OCI-LY7 (cell line): ENCODE measurements at regions of chr1 and their contacts with region 1.

Region 1: DNA sequence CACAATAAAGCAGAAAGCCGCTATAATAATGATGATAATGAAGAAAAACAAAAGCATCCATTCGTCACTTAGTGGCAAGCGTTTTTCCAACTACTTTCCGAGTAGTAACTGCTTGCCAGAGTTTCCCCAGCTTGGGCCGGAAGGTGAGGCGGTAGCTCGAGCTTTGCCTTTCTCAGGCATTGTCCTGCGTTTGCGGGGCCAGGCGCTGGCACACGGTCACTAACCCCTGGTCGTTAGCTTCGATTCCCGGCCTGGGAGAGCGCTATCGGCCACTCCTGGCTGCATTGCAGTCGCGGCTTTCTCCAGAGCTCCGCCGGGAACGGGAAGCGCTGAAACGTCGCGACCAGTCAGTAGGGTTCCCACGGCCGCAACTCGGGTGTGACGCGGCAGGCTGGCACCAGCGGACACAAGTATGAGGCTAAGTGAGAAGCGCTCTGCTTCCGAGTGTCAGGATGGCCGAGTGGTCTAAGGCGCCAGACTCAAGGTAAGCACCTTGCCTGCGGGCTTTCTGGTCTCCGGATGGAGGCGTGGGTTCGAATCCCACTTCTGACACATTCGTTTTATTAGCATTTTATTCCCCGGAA is 14.6 kb upstream of the ZNF692 start:
- DNase-seq: peak; percentile 95
- H3K4me3 ChIP-seq: peak overlapping the region; percentile 81
- H3K27ac ChIP-seq: peak overlapping the region; percentile 83
- H3K4me1 ChIP-seq: peaks cover 12% of the 10 kb centered on the region
- CTCF ChIP-seq: no peak

Region 2: DNA sequence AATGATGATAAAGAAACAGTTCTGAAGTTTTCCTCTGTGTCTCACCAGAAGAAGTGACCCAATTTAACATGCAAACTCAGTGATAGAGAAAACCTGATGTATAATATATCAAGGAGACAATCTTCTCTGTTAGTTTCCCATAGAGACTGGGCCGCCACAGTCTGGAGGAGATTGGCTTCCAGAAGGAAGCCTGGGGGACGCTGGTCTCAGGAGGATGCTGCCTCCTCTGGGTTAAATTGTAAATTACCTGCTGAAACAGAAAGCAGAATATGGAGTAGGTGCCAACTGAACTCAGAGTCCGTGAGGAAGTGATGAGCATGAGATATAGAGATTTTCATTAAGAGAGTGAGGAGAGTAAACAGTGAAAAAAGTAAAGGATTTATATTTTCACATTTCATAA is 186.7 kb before region 1 on chr1:
- CTCF ChIA-PET with region 1: no interaction called
- POLR2A ChIA-PET with region 1: no interaction called
- intact Hi-C with region 1: no loop called
- DNase-seq: peak; percentile 6
- H3K4me3 ChIP-seq: no peak overlapping the region
- H3K27ac ChIP-seq: no peak overlapping the region
- H3K4me1 ChIP-seq: no peaks in the 10 kb centered on the region
- CTCF ChIP-seq: peak; percentile 60

Region 3: GRCh38 chr1:248779350-248779749 is 94.2 kb before region 1 on chr1:
- CTCF ChIA-PET with region 1: no interaction called
- POLR2A ChIA-PET with region 1: no interaction called
- intact Hi-C with region 1: no loop called
- DNase-seq: no peak
- H3K4me3 ChIP-seq: no peak overlapping the region
- H3K27ac ChIP-seq: no peak overlapping the region
- H3K4me1 ChIP-seq: no peaks in the 10 kb centered on the region
- CTCF ChIP-seq: no peak

Region 4: GRCh38 chr1:248807067-248807737 is 66.3 kb before region 1 on chr1:
- CTCF ChIA-PET with region 1: no interaction called
- POLR2A ChIA-PET with region 1: no interaction called
- intact Hi-C with region 1: no loop called
- DNase-seq: peak; percentile 73
- H3K4me3 ChIP-seq: no peak overlapping the region
- H3K27ac ChIP-seq: no peak overlapping the region
- H3K4me1 ChIP-seq: peaks cover 25% of the 10 kb centered on the region
- CTCF ChIP-seq: peak; percentile 92

Region 5: DNA sequence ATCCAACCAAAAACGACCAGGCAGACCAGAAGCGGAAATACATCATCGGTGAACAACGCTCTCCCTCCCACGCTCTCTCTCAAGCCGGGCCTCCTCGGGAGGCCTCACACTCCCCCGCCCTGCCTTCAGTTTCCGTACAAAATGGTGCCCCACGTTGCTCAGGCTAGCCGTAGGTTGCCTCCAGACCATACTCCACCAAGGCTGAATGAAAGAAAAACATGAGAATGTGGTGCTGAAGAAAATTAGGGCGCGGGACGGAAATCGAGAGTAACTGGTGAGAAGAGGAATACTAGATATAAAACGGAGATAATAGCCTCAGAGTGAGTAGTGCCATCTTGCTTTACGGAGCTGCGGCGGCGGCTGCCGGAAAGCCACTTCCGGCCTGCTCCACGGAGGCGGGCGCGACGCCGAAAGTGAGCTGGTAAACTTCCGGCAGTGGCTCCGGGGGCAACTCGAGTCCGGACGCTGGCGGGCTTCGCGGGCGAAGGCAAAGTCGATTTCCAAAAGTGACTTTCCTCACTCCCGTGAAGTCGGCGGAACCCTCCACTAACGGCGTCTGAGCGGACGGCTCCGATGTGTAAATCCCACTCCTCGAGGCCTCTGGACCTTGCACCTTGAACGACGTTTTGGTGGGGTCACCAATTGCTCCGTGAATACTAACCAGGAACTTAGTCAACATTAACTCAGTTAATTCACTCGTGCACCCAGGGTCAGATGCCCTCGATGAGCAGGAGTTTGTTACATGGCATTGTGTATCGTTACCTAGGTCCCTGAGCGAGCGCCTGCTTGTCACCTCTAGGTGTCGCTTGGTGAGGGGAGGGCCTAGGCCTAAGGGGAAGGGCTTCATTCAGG is 47.4 kb before region 1 on chr1 and contains the start of gene SH3BP5L:
- CTCF ChIA-PET with region 1: interaction called, 3 read pairs
- POLR2A ChIA-PET with region 1: interaction called, 4 read pairs
- intact Hi-C with region 1: loop called (anchors 1 kb)
- DNase-seq: peak; percentile 95
- H3K4me3 ChIP-seq: peak within 1 kb of the TSS; percentile 73
- H3K27ac ChIP-seq: peak within 1 kb of the TSS; percentile 78
- H3K4me1 ChIP-seq: peaks cover 40% of the 10 kb centered on the region
- CTCF ChIP-seq: peak; percentile 95
- total RNA-seq, gene SH3BP5L: 14.5 and 16.9 TPM in 2 replicates

Region 6: DNA sequence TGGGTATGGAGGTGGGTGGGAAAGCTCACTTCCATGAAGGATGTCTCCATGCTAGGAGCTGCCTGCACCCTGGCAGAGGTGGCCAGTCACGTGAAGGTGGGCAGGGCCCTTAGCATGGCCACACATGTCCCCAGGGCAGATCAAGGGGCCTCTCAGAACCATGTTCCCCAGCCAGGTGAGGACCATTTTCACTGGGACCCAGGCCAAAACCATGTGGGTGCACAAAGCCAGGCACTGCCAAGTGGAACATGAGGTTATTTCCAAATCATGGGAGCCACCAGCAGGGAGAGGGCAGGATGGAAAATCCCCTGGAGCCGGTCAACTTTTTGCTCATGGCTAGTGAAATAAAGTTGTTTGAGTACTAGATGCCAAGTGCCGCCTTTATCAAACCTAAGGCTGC is 24.3 kb before region 1 on chr1:
- CTCF ChIA-PET with region 1: no interaction called
- POLR2A ChIA-PET with region 1: no interaction called
- intact Hi-C with region 1: no loop called
- DNase-seq: no peak
- H3K4me3 ChIP-seq: no peak overlapping the region
- H3K27ac ChIP-seq: no peak overlapping the region
- H3K4me1 ChIP-seq: peaks cover 9% of the 10 kb centered on the region
- CTCF ChIP-seq: no peak

Region 7: DNA sequence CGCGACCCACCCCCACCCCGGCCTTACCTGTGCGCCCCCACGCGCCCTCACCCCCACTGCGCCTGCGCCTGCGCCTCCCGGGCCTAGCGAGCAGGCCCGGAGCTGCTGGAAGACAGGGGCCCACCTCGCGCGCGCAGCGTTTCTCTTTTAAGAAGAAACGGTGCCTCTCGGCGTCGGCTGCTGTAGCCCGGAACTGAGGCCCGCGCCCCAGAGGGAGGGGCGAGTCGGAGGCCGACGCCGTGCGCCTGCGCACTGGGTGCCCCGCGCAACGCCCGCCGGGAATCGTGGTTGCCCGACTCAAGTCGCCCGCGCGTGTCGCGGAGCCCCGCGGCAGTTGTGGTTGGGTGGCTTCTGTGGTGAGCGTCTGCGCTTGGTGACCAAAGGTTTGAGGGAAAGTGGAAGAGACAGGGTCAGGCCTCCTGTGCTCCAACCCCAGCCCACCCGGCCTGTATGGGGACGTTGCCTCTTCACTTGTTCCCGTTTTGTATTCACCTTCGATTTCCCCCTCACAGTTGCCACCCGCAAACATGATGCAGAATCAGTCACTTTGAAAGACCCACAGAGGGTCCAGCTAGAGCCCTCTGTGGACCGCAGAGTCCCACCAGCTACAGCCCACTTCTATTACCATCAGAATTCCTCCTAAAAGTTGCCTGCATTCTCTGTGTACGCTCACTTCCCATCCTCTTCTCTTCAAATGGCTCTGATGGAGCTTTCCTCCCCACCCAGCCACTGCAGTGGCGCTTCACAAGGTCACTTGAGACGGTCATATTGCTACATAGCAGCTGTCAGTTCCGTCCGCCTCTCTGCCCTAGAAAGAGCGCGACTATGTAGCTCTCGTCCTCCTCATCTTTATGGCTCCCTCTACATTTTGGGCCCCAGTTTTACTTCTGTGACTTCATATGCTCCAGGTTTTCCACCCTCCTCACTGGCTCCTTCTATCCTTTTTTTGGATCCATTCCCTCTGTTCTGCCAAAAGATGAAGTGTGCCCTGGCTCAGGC is 14.3 kb before region 1 on chr1 and contains the start of gene ZNF692:
- CTCF ChIA-PET with region 1: interaction called, 18 read pairs
- POLR2A ChIA-PET with region 1: interaction called, 17 read pairs
- intact Hi-C with region 1: loop called (anchors 1 kb)
- DNase-seq: peak; percentile 99
- H3K4me3 ChIP-seq: peak within 1 kb of the TSS; percentile 79
- H3K27ac ChIP-seq: peak within 1 kb of the TSS; percentile 72
- H3K4me1 ChIP-seq: peaks cover 39% of the 10 kb centered on the region
- CTCF ChIP-seq: no peak
- total RNA-seq, gene ZNF692: 49.7 and 65.0 TPM in 2 replicates

Region 8: DNA sequence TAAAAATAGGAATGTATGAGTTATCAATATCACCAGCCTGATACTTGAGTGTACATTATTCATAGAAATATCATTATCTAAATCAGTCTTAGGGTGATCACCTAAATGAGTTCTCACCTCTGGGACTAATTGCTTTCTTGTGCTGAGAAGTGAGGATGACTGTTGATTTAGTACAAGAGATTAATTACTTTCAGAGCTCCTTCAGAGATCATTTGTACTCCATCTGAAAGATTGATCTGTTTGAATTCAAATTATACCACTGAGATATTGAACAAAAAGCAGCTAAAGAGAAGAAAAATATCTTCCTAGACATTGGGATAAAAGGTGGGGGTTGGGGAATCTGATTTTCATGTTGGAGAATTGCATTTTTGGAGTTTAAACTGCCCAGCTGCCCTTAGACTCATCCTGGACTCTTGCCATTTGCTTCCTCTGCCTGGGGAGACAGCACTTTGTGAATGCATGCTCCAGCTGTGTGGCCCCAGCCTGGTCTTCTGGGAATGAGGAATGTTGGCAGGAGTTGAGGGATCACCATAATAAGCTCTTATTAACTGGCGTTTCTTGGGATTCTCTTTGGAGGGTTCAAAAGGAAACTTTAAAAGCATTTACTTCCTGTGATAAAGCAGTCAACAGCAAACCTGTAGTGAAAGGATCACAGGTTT is 12.9 kb after region 1 on chr1:
- CTCF ChIA-PET with region 1: no interaction called
- POLR2A ChIA-PET with region 1: interaction called, 12 read pairs
- intact Hi-C with region 1: no loop called
- DNase-seq: no peak
- H3K4me3 ChIP-seq: no peak overlapping the region
- H3K27ac ChIP-seq: no peak overlapping the region
- H3K4me1 ChIP-seq: peaks cover 24% of the 10 kb centered on the region
- CTCF ChIP-seq: no peak

Region 9: DNA sequence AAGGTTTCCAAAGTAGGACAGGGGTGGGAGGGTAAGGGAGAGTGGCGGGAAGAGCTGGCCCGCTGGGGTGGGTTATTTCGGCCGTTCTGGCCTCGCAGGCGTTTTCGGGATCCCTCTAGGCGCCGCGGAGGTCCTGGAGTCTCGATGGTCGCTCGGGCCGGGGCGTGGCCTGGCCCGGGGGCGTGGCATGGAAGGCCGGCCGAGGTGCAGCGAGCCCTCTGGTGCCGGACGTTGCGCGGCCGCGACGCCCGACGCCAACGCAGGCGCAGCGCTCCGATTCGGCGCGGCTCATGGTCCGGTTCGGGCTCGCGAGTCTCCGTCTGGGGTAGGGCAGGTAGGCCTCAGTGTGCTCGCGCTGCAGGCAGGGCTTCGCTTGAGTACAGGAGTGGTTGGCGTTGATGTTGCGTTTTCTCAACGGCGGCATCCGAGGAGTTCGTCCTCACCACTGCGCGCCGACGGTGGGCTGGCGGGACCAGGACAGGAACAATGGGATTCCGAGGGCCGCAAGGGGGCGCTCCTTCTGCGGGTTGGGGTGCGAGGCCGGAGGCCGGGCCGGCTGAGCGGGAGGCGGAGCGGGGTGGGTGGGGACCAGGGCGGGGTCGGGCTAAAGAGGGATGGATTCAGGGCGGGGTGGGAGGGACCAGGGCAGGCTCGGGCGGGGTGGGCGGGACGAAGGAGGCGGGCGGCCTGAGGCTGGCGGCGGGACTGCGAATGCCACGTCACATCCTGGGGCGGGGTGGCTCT is 32.7 kb after region 1 on chr1 and contains the start of gene PGBD2:
- CTCF ChIA-PET with region 1: interaction called, 8 read pairs
- POLR2A ChIA-PET with region 1: interaction called, 5 read pairs
- intact Hi-C with region 1: loop called (anchors 1 kb)
- DNase-seq: peak; percentile 95
- H3K4me3 ChIP-seq: peak within 1 kb of the TSS; percentile 72
- H3K27ac ChIP-seq: peak within 1 kb of the TSS; percentile 68
- H3K4me1 ChIP-seq: peaks cover 16% of the 10 kb centered on the region
- CTCF ChIP-seq: peak; percentile 74
- total RNA-seq, gene PGBD2: 9.2 and 13.0 TPM in 2 replicates